ENCODE measurements at regions of chr7 and their contacts with region 1.

Region 1: GRCh38 chr7:44082541-44083207 is 344 bp upstream of the POLM start:
- DNase-seq: peak; percentile 99
- H3K4me3 Mint-ChIP-seq: peak overlapping the region; percentile 74
- H3K27ac Mint-ChIP-seq: peak overlapping the region; percentile 56
- H3K4me1 Mint-ChIP-seq: peaks cover 33% of the 10 kb centered on the region
- H3K27me3 Mint-ChIP-seq: no peaks in the 10 kb centered on the region

Region 2: GRCh38 chr7:43925984-43926797 is 156.5 kb before region 1 on chr7 and contains the start of gene UBE2D4:
- CTCF ChIA-PET with region 1: no interaction called
- POLR2A ChIA-PET with region 1: interaction called, 3 read pairs
- intact Hi-C with region 1: loop called (anchors 1 kb)
- DNase-seq: peak; percentile 93
- H3K4me3 Mint-ChIP-seq: peak within 1 kb of the TSS; percentile 88
- H3K27ac Mint-ChIP-seq: peak within 1 kb of the TSS; percentile 86
- H3K4me1 Mint-ChIP-seq: peaks cover 26% of the 10 kb centered on the region
- H3K27me3 Mint-ChIP-seq: no peaks in the 10 kb centered on the region
- total RNA-seq, gene UBE2D4: 11.3 to 11.8 TPM

Region 3: DNA sequence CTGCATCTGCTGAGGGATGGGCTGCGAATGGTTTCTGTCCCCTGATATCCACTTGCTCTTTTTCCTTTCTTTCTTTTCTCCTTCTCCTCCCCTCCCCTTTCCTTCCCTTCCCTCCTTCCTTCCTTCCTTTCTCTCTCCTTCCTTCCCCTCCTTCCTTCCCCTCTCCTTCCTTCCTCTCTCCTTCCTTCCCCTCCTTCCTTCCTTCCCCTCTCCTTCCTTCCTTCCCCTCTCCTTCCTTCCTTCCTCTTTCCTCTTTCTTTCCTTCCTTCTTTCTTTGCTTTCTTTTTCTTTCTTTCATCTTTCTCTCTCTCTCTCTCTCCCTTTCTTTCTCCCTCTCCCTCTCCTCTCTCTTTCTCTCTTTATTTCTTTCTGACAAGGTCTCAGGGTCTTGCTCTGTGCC is 105.1 kb before region 1 on chr7:
- CTCF ChIA-PET with region 1: no interaction called
- POLR2A ChIA-PET with region 1: no interaction called
- intact Hi-C with region 1: no loop called
- DNase-seq: no peak
- H3K4me3 Mint-ChIP-seq: no peak overlapping the region
- H3K27ac Mint-ChIP-seq: no peak overlapping the region
- H3K4me1 Mint-ChIP-seq: no peaks in the 10 kb centered on the region
- H3K27me3 Mint-ChIP-seq: no peaks in the 10 kb centered on the region

Region 4: GRCh38 chr7:44067064-44067951 is 15.4 kb before region 1 on chr7:
- CTCF ChIA-PET with region 1: interaction called, 3 read pairs
- POLR2A ChIA-PET with region 1: interaction called, 19 read pairs
- intact Hi-C with region 1: no loop called
- DNase-seq: no peak
- H3K4me3 Mint-ChIP-seq: no peak overlapping the region
- H3K27ac Mint-ChIP-seq: no peak overlapping the region
- H3K4me1 Mint-ChIP-seq: peaks cover 35% of the 10 kb centered on the region
- H3K27me3 Mint-ChIP-seq: no peaks in the 10 kb centered on the region

Region 5: GRCh38 chr7:44112231-44113000 is 29.7 kb after region 1 on chr7:
- CTCF ChIA-PET with region 1: no interaction called
- POLR2A ChIA-PET with region 1: no interaction called
- intact Hi-C with region 1: no loop called
- DNase-seq: no peak
- H3K4me3 Mint-ChIP-seq: no peak overlapping the region
- H3K27ac Mint-ChIP-seq: no peak overlapping the region
- H3K4me1 Mint-ChIP-seq: no peaks in the 10 kb centered on the region
- H3K27me3 Mint-ChIP-seq: no peaks in the 10 kb centered on the region

Region 6: GRCh38 chr7:44123190-44124003 is 40.7 kb after region 1 on chr7 and contains the start of gene POLD2:
- CTCF ChIA-PET with region 1: interaction called, 6 read pairs
- POLR2A ChIA-PET with region 1: interaction called, 4 read pairs
- intact Hi-C with region 1: loop called (anchors 1 kb)
- DNase-seq: peak; percentile 99
- H3K4me3 Mint-ChIP-seq: peak within 1 kb of the TSS; percentile 78
- H3K27ac Mint-ChIP-seq: peak within 1 kb of the TSS; percentile 59
- H3K4me1 Mint-ChIP-seq: peaks cover 36% of the 10 kb centered on the region
- H3K27me3 Mint-ChIP-seq: no peaks in the 10 kb centered on the region
- total RNA-seq, gene POLD2: 189 to 212 TPM

Region 7: GRCh38 chr7:44163591-44163990 is 80.9 kb after region 1 on chr7:
- CTCF ChIA-PET with region 1: no interaction called
- POLR2A ChIA-PET with region 1: no interaction called
- intact Hi-C with region 1: no loop called
- DNase-seq: no peak
- H3K4me3 Mint-ChIP-seq: no peak overlapping the region
- H3K27ac Mint-ChIP-seq: no peak overlapping the region
- H3K4me1 Mint-ChIP-seq: peaks cover 5% of the 10 kb centered on the region
- H3K27me3 Mint-ChIP-seq: peaks cover 2% of the 10 kb centered on the region

Region 8: GRCh38 chr7:44257618-44258422 is 175.1 kb after region 1 on chr7:
- CTCF ChIA-PET with region 1: no interaction called
- POLR2A ChIA-PET with region 1: no interaction called
- intact Hi-C with region 1: loop called (anchors 1 kb)
- DNase-seq: peak; percentile 90
- H3K4me3 Mint-ChIP-seq: peak overlapping the region; percentile 52
- H3K27ac Mint-ChIP-seq: peak overlapping the region; percentile 90
- H3K4me1 Mint-ChIP-seq: peaks cover 38% of the 10 kb centered on the region
- H3K27me3 Mint-ChIP-seq: no peaks in the 10 kb centered on the region

Measured in activated CD4-positive, alpha-beta memory T cell treated with anti-CD3 and anti-CD28 coated beads for 36 hours (primary cell).